Endothelial cell of umbilical vein (primary cell): ENCODE measurements at regions of chr15 and their contacts with region 1.

Region 1: GRCh38 chr15:63122002-63122893 is 587 bp downstream of the LACTB start:
- DNase-seq: peak; percentile 86
- H3K4me3 ChIP-seq: peak overlapping the region; percentile 88 to 99 (median 88)
- H3K27ac ChIP-seq: peak overlapping the region; percentile 61
- H3K4me1 ChIP-seq: peaks cover 4% of the 10 kb centered on the region
- H3K27me3 ChIP-seq: no peaks in the 10 kb centered on the region
- CTCF ChIP-seq: no peak
- POLR2A ChIP-seq: peak; percentile 24

Region 2: GRCh38 chr15:63048115-63048775 is 74.0 kb before region 1 on chr15:
- CTCF ChIA-PET with region 1: no interaction called
- POLR2A ChIA-PET with region 1: no interaction called
- dilution Hi-C with region 1: no loop called
- intact Hi-C with region 1: loop called (anchors 2 kb)
- DNase-seq: peak; percentile 94
- H3K4me3 ChIP-seq: peak overlapping the region; percentile 72 to 87 (median 78)
- H3K27ac ChIP-seq: peak overlapping the region; percentile 68
- H3K4me1 ChIP-seq: peaks cover 81% of the 10 kb centered on the region
- H3K27me3 ChIP-seq: no peaks in the 10 kb centered on the region
- CTCF ChIP-seq: peak; percentile 92 to 95
- POLR2A ChIP-seq: peak; percentile 66

Region 3: DNA sequence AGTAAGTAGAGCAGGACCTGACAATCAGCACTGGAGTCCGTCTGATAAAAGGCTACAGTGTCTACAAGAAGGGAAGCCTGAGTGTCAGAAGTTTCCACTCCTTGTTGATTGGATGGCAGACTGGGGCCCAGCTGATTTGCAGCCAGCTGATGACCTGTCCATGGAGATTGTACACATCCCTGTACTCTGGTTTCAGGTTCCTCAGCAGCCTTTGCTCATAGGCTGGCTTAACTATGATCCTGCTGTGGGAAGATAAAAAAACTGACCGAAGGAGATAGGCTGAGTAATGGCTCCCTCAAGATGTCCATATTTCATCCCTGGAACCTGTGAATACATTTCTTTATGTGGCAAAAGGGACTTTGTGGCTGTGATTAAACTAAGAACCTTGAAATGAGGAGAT is 12.3 kb before region 1 on chr15:
- CTCF ChIA-PET with region 1: no interaction called
- POLR2A ChIA-PET with region 1: no interaction called
- dilution Hi-C with region 1: no loop called
- intact Hi-C with region 1: loop called (anchors 1 kb)
- DNase-seq: no peak
- H3K4me3 ChIP-seq: no peak overlapping the region
- H3K27ac ChIP-seq: no peak overlapping the region
- H3K4me1 ChIP-seq: peaks cover 5% of the 10 kb centered on the region
- H3K27me3 ChIP-seq: no peaks in the 10 kb centered on the region
- CTCF ChIP-seq: no peak
- POLR2A ChIP-seq: no peak

Region 4: DNA sequence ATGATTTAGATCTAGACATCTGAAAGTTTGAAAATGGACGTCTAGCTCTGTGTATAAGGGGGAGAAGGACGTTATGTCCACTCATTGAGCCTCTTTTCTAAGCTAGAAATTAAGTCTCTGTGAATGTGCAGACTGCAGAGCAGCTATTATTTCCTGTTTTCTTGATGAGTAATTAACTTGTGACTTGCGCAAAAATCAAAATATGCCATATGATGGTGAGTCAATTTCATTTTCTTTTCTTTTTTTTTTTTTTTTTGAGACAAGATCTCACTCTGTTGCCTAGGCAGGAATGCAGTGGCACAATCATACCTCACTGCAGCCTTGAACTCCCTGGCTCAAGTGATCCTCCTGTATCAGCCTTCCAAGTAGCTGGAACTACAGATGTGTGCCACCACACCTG is 13.6 kb after region 1 on chr15:
- CTCF ChIA-PET with region 1: interaction called, 5 read pairs
- POLR2A ChIA-PET with region 1: no interaction called
- dilution Hi-C with region 1: no loop called
- intact Hi-C with region 1: loop called (anchors 1 kb)
- DNase-seq: peak; percentile 94
- H3K4me3 ChIP-seq: no peak overlapping the region
- H3K27ac ChIP-seq: peak overlapping the region; percentile 96
- H3K4me1 ChIP-seq: peaks cover 36% of the 10 kb centered on the region
- H3K27me3 ChIP-seq: no peaks in the 10 kb centered on the region
- CTCF ChIP-seq: no peak
- POLR2A ChIP-seq: peak; percentile 78

Region 5: GRCh38 chr15:63157118-63157843 is 35.0 kb after region 1 on chr15 and contains the start of gene RPS27L:
- CTCF ChIA-PET with region 1: no interaction called
- POLR2A ChIA-PET with region 1: interaction called, 3 read pairs
- dilution Hi-C with region 1: no loop called
- intact Hi-C with region 1: loop called (anchors 1 kb)
- DNase-seq: peak; percentile 92
- H3K4me3 ChIP-seq: peak within 1 kb of the TSS; percentile 54 to 98 (median 88)
- H3K27ac ChIP-seq: peak within 1 kb of the TSS; percentile 71
- H3K4me1 ChIP-seq: peaks cover 11% of the 10 kb centered on the region
- H3K27me3 ChIP-seq: no peaks in the 10 kb centered on the region
- CTCF ChIP-seq: no peak
- POLR2A ChIP-seq: peak; percentile 99
- total RNA-seq, gene RPS27L: 338 and 345 TPM in 2 replicates

Region 6: GRCh38 chr15:63277038-63277892 is 155.0 kb after region 1 on chr15 and contains the start of gene APH1B:
- CTCF ChIA-PET with region 1: no interaction called
- POLR2A ChIA-PET with region 1: no interaction called
- dilution Hi-C with region 1: no loop called
- intact Hi-C with region 1: loop called (anchors 1 kb)
- DNase-seq: peak; percentile 75
- H3K4me3 ChIP-seq: peak within 1 kb of the TSS; percentile 68 to 85 (median 73)
- H3K27ac ChIP-seq: peak within 1 kb of the TSS; percentile 33
- H3K4me1 ChIP-seq: peaks cover 9% of the 10 kb centered on the region
- H3K27me3 ChIP-seq: no peaks in the 10 kb centered on the region
- CTCF ChIP-seq: no peak
- POLR2A ChIP-seq: peak; percentile 83
- total RNA-seq, gene APH1B: 24.6 and 28.8 TPM in 2 replicates